OCI-LY7 (cell line): ENCODE measurements at regions of chr9 and their contacts with region 1.

Region 1: GRCh38 chr9:36407122-36407723 is 7.2 kb upstream of the RNF38 start:
- DNase-seq: peak; percentile 74
- H3K4me3 ChIP-seq: no peak overlapping the region
- H3K27ac ChIP-seq: no peak overlapping the region
- H3K4me1 ChIP-seq: no peaks in the 10 kb centered on the region
- CTCF ChIP-seq: peak; percentile 96

Region 2: DNA sequence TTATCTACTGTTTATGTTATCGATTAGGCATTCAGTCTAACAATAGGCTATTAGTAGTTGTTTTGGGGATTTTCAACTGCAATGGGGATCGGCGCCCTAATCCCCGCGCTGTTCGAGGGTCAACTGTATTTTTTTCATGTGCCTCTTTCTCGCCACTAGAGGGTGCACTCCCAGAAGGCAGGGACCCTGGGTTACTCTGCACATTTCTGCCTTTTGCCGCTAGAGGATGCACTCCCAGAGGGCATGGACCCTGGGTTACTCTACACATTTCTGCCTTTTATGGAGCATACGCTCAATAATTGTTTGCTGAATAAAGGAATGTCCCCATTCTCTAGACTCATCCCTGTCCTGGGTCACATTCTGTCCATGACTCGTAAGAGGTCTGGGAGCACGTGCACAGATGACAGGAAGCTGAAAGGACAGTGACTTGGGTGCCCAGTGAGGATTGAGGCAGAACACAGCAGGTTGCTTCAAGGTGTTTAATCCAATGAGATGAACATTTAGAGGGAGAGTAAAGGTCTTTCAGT is 398.4 kb before region 1 on chr9:
- CTCF ChIA-PET with region 1: no interaction called
- POLR2A ChIA-PET with region 1: no interaction called
- intact Hi-C with region 1: no loop called
- DNase-seq: peak; percentile 77
- H3K4me3 ChIP-seq: no peak overlapping the region
- H3K27ac ChIP-seq: no peak overlapping the region
- H3K4me1 ChIP-seq: peaks cover 10% of the 10 kb centered on the region
- CTCF ChIP-seq: peak; percentile 100

Region 3: GRCh38 chr9:36450110-36450732 is 43.0 kb after region 1 on chr9:
- CTCF ChIA-PET with region 1: no interaction called
- POLR2A ChIA-PET with region 1: no interaction called
- intact Hi-C with region 1: loop called (anchors 1 kb)
- DNase-seq: peak; percentile 61
- H3K4me3 ChIP-seq: no peak overlapping the region
- H3K27ac ChIP-seq: no peak overlapping the region
- H3K4me1 ChIP-seq: no peaks in the 10 kb centered on the region
- CTCF ChIP-seq: peak; percentile 93

Region 4: DNA sequence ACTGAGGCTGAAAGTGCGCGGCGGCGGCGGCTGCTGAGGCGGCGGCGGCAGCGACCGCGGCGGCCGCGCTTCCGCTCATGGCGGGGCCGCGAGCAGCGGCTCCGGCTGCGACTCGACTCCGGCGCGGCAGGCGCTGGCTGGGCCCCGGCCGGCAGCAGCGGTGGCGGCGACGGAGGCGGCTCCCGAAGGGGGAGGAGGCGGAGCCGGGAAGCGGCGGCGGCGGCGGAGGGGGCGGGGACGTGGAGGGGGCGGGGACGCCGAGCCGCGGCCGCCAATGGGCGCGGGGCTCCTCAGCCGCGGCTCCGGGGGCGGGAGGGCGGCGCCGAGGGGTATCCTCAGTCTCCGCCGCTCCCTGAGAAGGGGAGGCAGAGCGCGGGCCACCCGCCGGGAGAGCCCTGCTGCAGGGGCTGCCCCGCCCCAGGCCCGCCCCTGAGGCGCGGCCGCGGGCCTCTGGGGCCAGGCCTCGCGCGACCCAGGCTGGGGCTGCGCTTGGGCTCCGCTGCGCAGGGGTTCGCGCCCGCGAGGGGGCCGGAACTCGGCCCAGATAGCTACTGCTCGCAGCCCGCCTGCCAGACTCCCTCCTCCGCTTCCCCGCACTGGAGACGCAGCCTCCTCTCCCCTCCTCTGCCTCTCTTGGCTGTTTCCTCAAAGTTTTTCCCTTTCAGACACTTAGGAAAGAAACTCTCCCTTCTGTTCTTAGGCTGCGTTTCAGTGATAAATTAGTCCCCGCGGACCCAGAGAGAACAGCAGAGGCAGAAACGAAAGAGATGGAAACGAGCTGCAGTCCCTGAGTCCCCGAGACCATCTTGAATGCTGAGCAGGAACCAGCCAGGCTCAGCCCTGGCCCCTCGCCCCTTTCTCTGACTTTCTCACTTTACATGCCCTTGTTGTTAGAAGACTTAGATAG is 80.5 kb after region 1 on chr9:
- CTCF ChIA-PET with region 1: no interaction called
- POLR2A ChIA-PET with region 1: interaction called, 3 read pairs
- intact Hi-C with region 1: loop called (anchors 2 kb)
- DNase-seq: peak; percentile 95
- H3K4me3 ChIP-seq: peak overlapping the region; percentile 83
- H3K27ac ChIP-seq: peak overlapping the region; percentile 80
- H3K4me1 ChIP-seq: peaks cover 27% of the 10 kb centered on the region
- CTCF ChIP-seq: no peak

Region 5: DNA sequence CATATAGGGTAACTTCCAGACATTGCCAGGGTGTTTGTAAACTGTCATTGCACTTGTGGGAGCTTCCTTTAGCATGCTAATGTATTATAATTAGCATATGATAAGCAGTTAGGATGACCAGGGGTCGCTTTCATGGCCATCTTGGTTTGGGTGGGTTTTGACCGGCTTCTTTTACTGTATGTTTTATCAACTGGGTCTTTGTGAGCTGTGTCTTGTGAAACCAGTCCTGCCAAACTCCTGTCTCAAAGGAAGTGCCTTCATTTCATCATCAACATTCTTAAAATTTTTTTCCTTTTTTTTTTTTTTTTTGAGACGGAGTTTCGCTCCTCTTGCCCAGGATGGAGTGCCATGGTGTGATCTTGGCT is 153.6 kb after region 1 on chr9:
- CTCF ChIA-PET with region 1: interaction called, 5 read pairs
- POLR2A ChIA-PET with region 1: interaction called, 3 read pairs
- intact Hi-C with region 1: loop called (anchors 1 kb)
- DNase-seq: no peak
- H3K4me3 ChIP-seq: no peak overlapping the region
- H3K27ac ChIP-seq: no peak overlapping the region
- H3K4me1 ChIP-seq: no peaks in the 10 kb centered on the region
- CTCF ChIP-seq: no peak

Region 6: GRCh38 chr9:36728651-36729520 is 321.7 kb after region 1 on chr9:
- CTCF ChIA-PET with region 1: interaction called, 3 read pairs
- POLR2A ChIA-PET with region 1: no interaction called
- intact Hi-C with region 1: loop called (anchors 1 kb)
- DNase-seq: peak; percentile 81
- H3K4me3 ChIP-seq: no peak overlapping the region
- H3K27ac ChIP-seq: no peak overlapping the region
- H3K4me1 ChIP-seq: peaks cover 16% of the 10 kb centered on the region
- CTCF ChIP-seq: peak; percentile 99